AG04449 (cell line): ENCODE measurements at regions of chr7 and their contacts with region 1.

Region 1: GRCh38 chr7:123865517-123866117 is 20.6 kb downstream of the HYAL4 start:
- DNase-seq: no peak
- H3K4me3 ChIP-seq: no peak overlapping the region
- CTCF ChIP-seq: peak; percentile 60

Region 2: DNA sequence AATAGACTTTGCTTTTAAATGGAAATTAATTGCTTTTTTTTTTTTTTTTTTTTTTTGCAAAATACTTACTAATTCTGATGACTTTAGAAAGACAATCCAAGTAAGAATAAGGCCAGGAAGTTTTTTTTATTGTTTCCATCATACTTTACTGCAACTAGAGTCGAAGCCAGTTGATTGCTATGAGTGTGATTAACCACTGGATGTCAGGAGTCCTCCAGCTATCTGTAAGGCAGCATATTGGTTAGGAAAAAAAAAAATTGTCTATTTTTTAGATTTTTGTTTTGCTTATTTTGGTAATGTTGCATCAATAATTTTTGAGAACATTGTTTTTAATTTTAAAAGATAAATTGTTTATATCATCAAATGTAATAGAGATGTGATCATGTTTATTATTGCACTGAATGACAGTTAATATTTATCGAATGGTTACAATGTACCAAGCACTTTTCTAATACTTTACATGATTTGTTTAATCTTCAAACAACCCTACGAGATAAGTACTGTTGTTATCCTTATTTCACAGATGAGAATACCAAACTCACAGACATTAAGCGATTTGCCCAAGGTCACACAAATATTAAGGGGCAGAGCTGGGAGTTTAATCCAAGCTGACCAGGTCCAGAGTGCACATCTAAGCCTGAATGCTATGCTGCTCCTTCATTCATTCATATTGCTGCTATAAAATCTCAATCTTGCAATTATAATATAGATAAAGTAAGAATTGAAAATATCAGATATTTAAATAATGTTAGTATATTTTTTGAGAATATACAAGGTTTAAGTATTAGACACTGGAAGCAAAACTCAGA is 229.9 kb before region 1 on chr7:
- CTCF ChIA-PET with region 1: interaction called, 70 read pairs
- POLR2A ChIA-PET with region 1: no interaction called
- DNase-seq: no peak
- H3K4me3 ChIP-seq: no peak overlapping the region
- CTCF ChIP-seq: peak; percentile 24

Region 3: GRCh38 chr7:123682690-123683089 is 182.9 kb before region 1 on chr7:
- CTCF ChIA-PET with region 1: interaction called, 58 read pairs
- POLR2A ChIA-PET with region 1: no interaction called
- DNase-seq: peak; percentile 34
- H3K4me3 ChIP-seq: no peak overlapping the region
- CTCF ChIP-seq: peak; percentile 25

Region 4: DNA sequence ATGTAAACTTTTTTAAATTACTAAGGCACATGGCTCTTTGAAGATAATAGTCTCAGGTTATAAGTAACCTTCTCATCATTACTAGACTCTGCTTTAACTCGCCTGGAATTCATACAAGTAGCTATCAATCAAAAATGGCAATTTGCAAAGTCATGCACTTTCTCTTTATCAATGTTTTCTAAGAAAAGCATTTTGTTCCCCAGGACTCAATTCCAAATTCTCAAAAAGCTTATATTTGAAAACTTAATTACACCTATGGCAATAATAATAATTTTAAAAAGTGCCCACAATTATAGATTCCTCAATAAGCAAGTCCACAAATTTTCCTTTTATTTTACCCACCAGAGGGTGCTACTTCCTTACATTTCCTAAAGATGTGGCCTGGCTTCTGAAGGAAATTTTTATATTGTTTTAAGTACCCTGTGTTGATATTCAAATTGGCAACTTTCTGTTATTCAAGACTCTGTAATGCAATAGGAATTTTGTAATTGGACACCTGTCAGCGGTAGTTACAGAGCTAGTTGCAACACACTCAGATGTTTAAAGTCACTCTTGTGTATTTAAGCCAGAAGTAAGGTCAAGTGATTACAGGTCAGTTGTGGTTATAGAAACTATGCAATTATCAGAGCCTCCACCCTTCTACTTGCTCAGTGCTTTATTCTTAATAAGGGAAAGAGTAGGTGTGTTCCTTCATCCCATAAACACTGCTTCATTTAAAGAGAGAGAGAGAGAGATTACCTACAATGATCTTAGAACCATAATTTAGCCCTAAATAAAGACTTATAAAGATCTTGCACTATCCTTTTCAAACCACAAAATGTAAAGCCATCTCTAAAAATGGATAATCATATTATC is 67.7 kb before region 1 on chr7:
- CTCF ChIA-PET with region 1: interaction called, 50 read pairs
- POLR2A ChIA-PET with region 1: no interaction called
- DNase-seq: peak; percentile 26
- H3K4me3 ChIP-seq: no peak overlapping the region
- CTCF ChIP-seq: peak; percentile 25